ENCODE measurements at regions of chr15 and their contacts with region 1.

Region 1: GRCh38 chr15:40832960-40833359 is 4.5 kb upstream of the PPP1R14D start:
- DNase-seq: no peak
- ATAC-seq: no peak
- H3K4me3 ChIP-seq: no peak overlapping the region
- H3K27ac ChIP-seq: no peak overlapping the region
- H3K4me1 ChIP-seq: no peaks in the 10 kb centered on the region; the same call in 1 of the 2 replicates
- H3K27me3 ChIP-seq: peaks cover 6% of the 10 kb centered on the region; the same call in 1 of the 2 replicates
- CTCF ChIP-seq: no peak
- POLR2A ChIP-seq: no peak
- RAD21 ChIP-seq: no peak

Region 2: DNA sequence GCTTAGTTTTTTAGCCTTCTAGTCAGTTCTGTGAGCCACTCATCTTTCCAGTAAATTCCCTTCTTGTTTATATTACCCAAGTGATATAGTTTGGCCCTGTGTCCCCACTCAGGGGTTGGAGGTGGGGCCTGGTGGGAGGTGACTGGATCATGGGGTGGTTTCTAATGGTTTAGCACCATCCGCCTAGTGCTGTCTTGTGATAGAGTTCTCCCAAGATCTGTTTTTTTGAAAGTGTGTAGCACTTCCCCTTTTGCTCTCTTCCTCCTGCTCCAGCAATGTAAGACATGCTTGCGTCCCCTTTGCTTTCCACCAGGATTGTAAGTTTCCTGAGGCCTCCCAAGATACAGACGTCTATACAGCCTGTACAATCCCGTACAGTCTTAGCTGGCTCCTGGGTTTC is 336.8 kb after region 1 on chr15:
- CTCF ChIA-PET with region 1: no interaction called
- POLR2A ChIA-PET with region 1: no interaction called
- dilution Hi-C with region 1: no loop called
- in situ Hi-C with region 1: no loop called
- intact Hi-C with region 1: no loop called
- DNase-seq: no peak
- ATAC-seq: peak; percentile 42
- H3K4me3 ChIP-seq: no peak overlapping the region
- H3K27ac ChIP-seq: no peak overlapping the region
- H3K4me1 ChIP-seq: peaks cover 2% of the 10 kb centered on the region; the same call in 1 of the 2 replicates
- H3K27me3 ChIP-seq: no peaks in the 10 kb centered on the region
- CTCF ChIP-seq: no peak
- POLR2A ChIP-seq: no peak
- RAD21 ChIP-seq: no peak

Region 3: GRCh38 chr15:41401904-41402267 is 568.9 kb after region 1 on chr15:
- CTCF ChIA-PET with region 1: no interaction called
- POLR2A ChIA-PET with region 1: interaction called, 12 read pairs
- dilution Hi-C with region 1: no loop called
- in situ Hi-C with region 1: no loop called
- intact Hi-C with region 1: no loop called
- DNase-seq: no peak
- ATAC-seq: peak; percentile 38
- H3K4me3 ChIP-seq: peak overlapping the region; percentile 70
- H3K27ac ChIP-seq: peak overlapping the region; percentile 73
- H3K4me1 ChIP-seq: peaks cover 3% of the 10 kb centered on the region; the same call in 1 of the 2 replicates
- H3K27me3 ChIP-seq: no peaks in the 10 kb centered on the region
- CTCF ChIP-seq: no peak
- POLR2A ChIP-seq: no peak
- RAD21 ChIP-seq: no peak

Measured in IMR-90 (cell line).